CD4-positive, alpha-beta T cell (primary cell): ENCODE measurements at regions of chr7 and their contacts with region 1.

Region 1: DNA sequence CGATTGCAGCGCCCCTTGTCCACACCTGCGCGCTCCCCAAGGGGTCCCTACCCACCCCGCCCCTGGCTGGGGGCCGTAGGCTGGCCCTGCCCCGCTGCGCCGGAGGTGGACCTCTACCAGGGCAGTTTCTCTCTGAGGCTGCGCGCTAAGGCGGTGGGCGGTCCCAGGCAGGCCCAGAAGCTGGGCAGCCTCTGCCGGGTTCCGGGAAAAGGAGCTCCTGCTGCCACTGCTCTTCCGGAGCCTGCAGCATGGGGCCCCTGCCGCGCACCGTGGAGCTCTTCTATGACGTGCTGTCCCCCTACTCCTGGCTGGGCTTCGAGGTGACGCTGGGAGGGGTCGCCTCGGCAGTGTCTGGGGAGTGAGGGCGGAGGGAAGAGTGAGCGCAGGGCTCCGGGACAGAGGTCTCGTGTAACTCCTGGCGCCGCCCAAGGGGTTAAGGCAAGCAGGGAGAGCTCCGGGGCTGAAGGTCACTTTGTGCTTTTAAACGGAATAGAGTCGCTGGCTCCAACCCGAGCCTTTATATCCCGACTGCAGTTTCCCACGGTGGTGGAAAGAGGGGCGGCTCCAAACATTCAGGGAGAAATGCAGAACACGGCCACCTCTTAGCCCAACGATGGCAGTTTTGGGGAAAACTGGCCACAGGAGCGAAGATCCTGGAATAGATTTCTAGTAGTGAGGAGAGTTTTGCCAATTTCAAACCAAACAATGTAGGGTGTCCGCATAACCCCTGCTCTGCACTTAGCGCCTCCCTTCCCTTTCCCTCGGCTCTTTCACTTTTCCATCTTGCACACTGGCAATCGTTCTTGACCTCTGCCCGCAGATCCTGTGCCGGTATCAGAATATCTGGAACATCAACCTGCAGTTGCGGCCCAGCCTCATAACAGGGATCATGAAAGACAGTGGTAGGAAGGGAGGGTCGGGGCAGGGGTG is at the start of gene GSTK1:
- DNase-seq: peak; percentile 53 to 87 (median 77)
- ATAC-seq: peak; percentile 96
- H3K4me3 ChIP-seq: peak within 1 kb of the TSS; percentile 98
- H3K4me3 Mint-ChIP-seq: peak within 1 kb of the TSS; percentile 98
- H3K27ac ChIP-seq: peak within 1 kb of the TSS; percentile 74
- H3K27ac Mint-ChIP-seq: peak within 1 kb of the TSS; percentile 95
- H3K4me1 ChIP-seq: peaks cover 49% of the 10 kb centered on the region
- H3K4me1 Mint-ChIP-seq: peaks cover 64% of the 10 kb centered on the region
- H3K27me3 ChIP-seq: no peaks in the 10 kb centered on the region
- H3K27me3 Mint-ChIP-seq: no peaks in the 10 kb centered on the region
- CTCF ChIP-seq: no peak
- total RNA-seq, gene GSTK1: 245 to 259 TPM

Region 2: GRCh38 chr7:143248761-143249354 is 14.7 kb before region 1 on chr7:
- CTCF ChIA-PET with region 1: interaction called, 5 read pairs
- POLR2A ChIA-PET with region 1: interaction called, 40 read pairs
- intact Hi-C with region 1: no loop called
- DNase-seq: no peak
- ATAC-seq: no peak
- H3K4me3 ChIP-seq: no peak overlapping the region
- H3K4me3 Mint-ChIP-seq: peak overlapping the region; percentile 23
- H3K27ac ChIP-seq: peak overlapping the region in 1 of 2 donors; percentile 10
- H3K27ac Mint-ChIP-seq: no peak overlapping the region
- H3K4me1 ChIP-seq: peaks cover 54% of the 10 kb centered on the region
- H3K4me1 Mint-ChIP-seq: peaks cover 97% of the 10 kb centered on the region
- H3K27me3 ChIP-seq: no peaks in the 10 kb centered on the region
- H3K27me3 Mint-ChIP-seq: no peaks in the 10 kb centered on the region
- CTCF ChIP-seq: no peak

Region 3: GRCh38 chr7:143318656-143319055 is 55.1 kb after region 1 on chr7:
- CTCF ChIA-PET with region 1: no interaction called
- POLR2A ChIA-PET with region 1: no interaction called
- intact Hi-C with region 1: no loop called
- DNase-seq: no peak
- ATAC-seq: no peak
- H3K4me3 ChIP-seq: no peak overlapping the region
- H3K4me3 Mint-ChIP-seq: no peak overlapping the region
- H3K27ac ChIP-seq: no peak overlapping the region
- H3K27ac Mint-ChIP-seq: no peak overlapping the region
- H3K4me1 ChIP-seq: no peaks in the 10 kb centered on the region
- H3K4me1 Mint-ChIP-seq: no peaks in the 10 kb centered on the region
- H3K27me3 ChIP-seq: no peaks in the 10 kb centered on the region
- H3K27me3 Mint-ChIP-seq: no peaks in the 10 kb centered on the region
- CTCF ChIP-seq: no peak